SK-N-SH (cell line): ENCODE measurements at regions of chr13 and their contacts with region 1.

Region 1: GRCh38 chr13:26872525-26873385 is 112.2 kb upstream of the GPR12 start:
- DNase-seq: peak; percentile 74
- H3K4me3 ChIP-seq: peak overlapping the region in 1 of 2 experiments; percentile 46; a peak in 2 of 4 replicates
- H3K27ac ChIP-seq: peak overlapping the region in 1 of 2 experiments; percentile 16; a peak in 1 of 4 replicates
- H3K4me1 ChIP-seq: peaks cover 0 to 7% of the 10 kb centered on the region in 2 experiments; a peak in 1 of 4 replicates
- H3K27me3 ChIP-seq: no peaks in the 10 kb centered on the region
- CTCF ChIP-seq: peak; percentile 73
- EP300 ChIP-seq: no peak
- RAD21 ChIP-seq: peak; percentile 84

Region 2: GRCh38 chr13:26707122-26708006 is 165.4 kb before region 1 on chr13:
- CTCF ChIA-PET with region 1: interaction called, 170 read pairs
- POLR2A ChIA-PET with region 1: no interaction called
- DNase-seq: peak; percentile 77
- H3K4me3 ChIP-seq: no peak overlapping the region
- H3K27ac ChIP-seq: no peak overlapping the region
- H3K4me1 ChIP-seq: no peaks in the 10 kb centered on the region; a peak in 1 of 4 replicates
- H3K27me3 ChIP-seq: no peaks in the 10 kb centered on the region
- CTCF ChIP-seq: peak; percentile 59
- EP300 ChIP-seq: no peak
- RAD21 ChIP-seq: peak; percentile 92

Region 3: GRCh38 chr13:26749285-26749684 is 123.5 kb before region 1 on chr13:
- CTCF ChIA-PET with region 1: interaction called, 20 read pairs
- POLR2A ChIA-PET with region 1: no interaction called
- DNase-seq: no peak
- H3K4me3 ChIP-seq: no peak overlapping the region
- H3K27ac ChIP-seq: no peak overlapping the region
- H3K4me1 ChIP-seq: no peaks in the 10 kb centered on the region
- H3K27me3 ChIP-seq: peaks cover 4% of the 10 kb centered on the region; the same call in 1 of the 2 replicates
- CTCF ChIP-seq: no peak
- EP300 ChIP-seq: no peak
- RAD21 ChIP-seq: no peak

Region 4: GRCh38 chr13:26831336-26831908 is 41.3 kb before region 1 on chr13:
- CTCF ChIA-PET with region 1: interaction called, 21 read pairs
- POLR2A ChIA-PET with region 1: no interaction called
- DNase-seq: peak; percentile 80
- H3K4me3 ChIP-seq: no peak overlapping the region
- H3K27ac ChIP-seq: peak overlapping the region in 1 of 2 experiments; percentile 45; a peak in 2 of 4 replicates
- H3K4me1 ChIP-seq: peaks cover 0 to 8% of the 10 kb centered on the region in 2 experiments; a peak in 1 of 4 replicates
- H3K27me3 ChIP-seq: no peaks in the 10 kb centered on the region
- CTCF ChIP-seq: no peak
- EP300 ChIP-seq: peak in 1 of 2 experiments; percentile 47; a peak in 1 of 4 replicates
- RAD21 ChIP-seq: no peak

Region 5: DNA sequence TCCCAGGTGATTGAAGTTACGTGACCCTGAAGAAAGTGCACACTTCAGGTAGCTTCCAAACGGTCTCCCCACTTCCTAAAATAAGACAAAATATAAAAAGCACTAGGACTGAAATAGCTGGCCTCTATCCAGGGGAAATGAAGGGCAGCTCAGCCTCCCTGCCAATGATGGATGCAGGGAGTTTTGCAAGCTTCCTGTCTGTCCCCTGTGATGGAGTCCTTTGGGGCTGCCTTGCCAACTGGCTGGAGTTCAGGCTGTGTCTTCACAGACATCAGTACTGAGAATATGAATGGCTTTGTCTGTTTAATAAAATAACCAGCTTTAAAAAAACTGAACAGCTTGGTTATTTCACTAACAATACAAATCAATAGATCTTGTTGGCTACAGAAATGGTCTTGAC is 10.8 kb before region 1 on chr13:
- CTCF ChIA-PET with region 1: interaction called, 50 read pairs
- POLR2A ChIA-PET with region 1: no interaction called
- DNase-seq: no peak
- H3K4me3 ChIP-seq: no peak overlapping the region
- H3K27ac ChIP-seq: no peak overlapping the region
- H3K4me1 ChIP-seq: peaks cover 0 to 6% of the 10 kb centered on the region in 2 experiments; a peak in 1 of 4 replicates
- H3K27me3 ChIP-seq: no peaks in the 10 kb centered on the region
- CTCF ChIP-seq: no peak
- EP300 ChIP-seq: no peak
- RAD21 ChIP-seq: no peak

Region 6: DNA sequence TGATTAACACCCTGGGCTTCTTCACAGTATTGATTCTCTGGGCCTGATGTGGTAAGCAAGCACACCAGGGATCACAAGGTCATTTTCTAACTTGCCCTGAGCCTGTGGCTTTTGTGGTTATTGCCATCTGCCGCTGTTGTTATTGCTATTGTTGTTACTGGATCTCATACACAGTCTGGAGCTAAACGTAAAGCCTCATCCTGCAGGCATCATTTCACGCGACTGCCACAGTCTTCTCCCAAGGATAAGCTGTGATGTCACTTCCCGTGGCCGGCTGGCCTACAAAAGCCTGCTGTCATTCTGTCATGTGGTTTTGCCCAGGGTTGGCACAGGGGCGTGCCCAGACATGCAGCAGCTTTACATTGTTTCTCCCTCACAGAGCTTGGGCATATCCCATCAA is 41.9 kb after region 1 on chr13:
- CTCF ChIA-PET with region 1: interaction called, 12 read pairs
- POLR2A ChIA-PET with region 1: no interaction called
- DNase-seq: no peak
- H3K4me3 ChIP-seq: no peak overlapping the region
- H3K27ac ChIP-seq: no peak overlapping the region
- H3K4me1 ChIP-seq: no peaks in the 10 kb centered on the region; a peak in 1 of 4 replicates
- H3K27me3 ChIP-seq: no peaks in the 10 kb centered on the region
- CTCF ChIP-seq: no peak
- EP300 ChIP-seq: no peak
- RAD21 ChIP-seq: no peak